Mammary epithelial cell (primary cell): ENCODE measurements at regions of chr6 and their contacts with region 1.

Region 1: GRCh38 chr6:130365166-130366106 is at the start of gene TMEM200A:
- DNase-seq: peak; percentile 56
- H3K4me3 ChIP-seq: peak within 1 kb of the TSS; percentile 86 to 93 (median 93)
- H3K27ac ChIP-seq: peak within 1 kb of the TSS; percentile 76
- H3K4me1 ChIP-seq: peaks cover 5% of the 10 kb centered on the region
- H3K27me3 ChIP-seq: no peaks in the 10 kb centered on the region
- CTCF ChIP-seq: peak; percentile 42 to 88
- total RNA-seq, gene TMEM200A: 3.5 to 15.2 TPM

Region 2: GRCh38 chr6:130381459-130382380 is 16.3 kb after region 1 on chr6:
- CTCF ChIA-PET with region 1: no interaction called
- dilution Hi-C with region 1: no loop called
- in situ Hi-C with region 1: no loop called
- intact Hi-C with region 1: loop called (anchors 2 kb)
- DNase-seq: no peak
- H3K4me3 ChIP-seq: no peak overlapping the region
- H3K27ac ChIP-seq: no peak overlapping the region
- H3K4me1 ChIP-seq: peaks cover 15% of the 10 kb centered on the region
- H3K27me3 ChIP-seq: no peaks in the 10 kb centered on the region
- CTCF ChIP-seq: no peak

Region 3: DNA sequence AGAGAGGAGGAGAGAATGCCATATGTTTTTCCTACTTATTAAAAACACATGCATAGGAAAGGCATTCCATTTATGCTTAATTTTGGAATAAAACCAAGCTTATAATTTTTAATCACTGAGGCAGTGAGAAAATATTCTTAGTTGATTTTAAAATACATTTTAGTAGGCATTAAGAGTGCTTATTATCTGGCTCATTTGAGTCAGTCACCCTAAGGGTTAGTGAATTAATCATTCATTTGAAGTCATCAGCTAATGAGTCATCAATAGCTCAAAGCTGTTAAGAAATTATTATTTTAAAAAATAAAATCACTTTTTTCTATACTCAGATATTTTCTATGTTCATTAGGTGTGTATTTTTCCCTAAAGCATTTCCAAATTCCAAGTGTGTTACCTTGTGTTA is 81.9 kb after region 1 on chr6:
- CTCF ChIA-PET with region 1: no interaction called
- dilution Hi-C with region 1: no loop called
- in situ Hi-C with region 1: no loop called
- intact Hi-C with region 1: loop called (anchors 5 kb)
- DNase-seq: peak; percentile 47
- H3K4me3 ChIP-seq: no peak overlapping the region
- H3K27ac ChIP-seq: peak overlapping the region; percentile 18
- H3K4me1 ChIP-seq: peaks cover 8% of the 10 kb centered on the region
- H3K27me3 ChIP-seq: no peaks in the 10 kb centered on the region
- CTCF ChIP-seq: no peak

Region 4: DNA sequence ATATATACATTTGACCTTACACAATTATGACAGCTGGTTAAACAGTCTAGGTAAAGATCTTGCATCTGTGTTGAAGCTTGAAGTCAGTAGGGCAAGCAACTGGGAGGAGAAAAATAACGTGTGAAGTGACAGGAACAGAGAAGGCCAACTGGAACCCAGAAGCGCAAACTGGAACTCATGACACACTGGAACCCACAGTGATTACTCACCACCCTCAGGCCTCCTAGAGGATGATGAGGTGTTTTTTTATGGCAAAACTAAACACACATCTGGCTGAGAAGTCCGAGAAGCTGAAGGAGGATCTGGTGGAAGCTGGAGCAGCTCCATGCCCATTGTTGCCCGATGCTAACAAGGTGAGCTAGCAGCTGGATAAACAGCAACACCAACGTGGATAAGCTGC is 108.5 kb after region 1 on chr6:
- CTCF ChIA-PET with region 1: no interaction called
- dilution Hi-C with region 1: no loop called
- in situ Hi-C with region 1: no loop called
- intact Hi-C with region 1: loop called (anchors 5 kb)
- DNase-seq: peak; percentile 96
- H3K4me3 ChIP-seq: no peak overlapping the region
- H3K27ac ChIP-seq: peak overlapping the region; percentile 40
- H3K4me1 ChIP-seq: peaks cover 16% of the 10 kb centered on the region
- H3K27me3 ChIP-seq: no peaks in the 10 kb centered on the region
- CTCF ChIP-seq: no peak

Region 5: GRCh38 chr6:130602151-130602770 is 236.8 kb after region 1 on chr6:
- CTCF ChIA-PET with region 1: no interaction called
- dilution Hi-C with region 1: no loop called
- in situ Hi-C with region 1: no loop called
- intact Hi-C with region 1: loop called (anchors 5 kb)
- DNase-seq: peak; percentile 98
- H3K4me3 ChIP-seq: no peak overlapping the region
- H3K27ac ChIP-seq: peak overlapping the region; percentile 92
- H3K4me1 ChIP-seq: peaks cover 55% of the 10 kb centered on the region
- H3K27me3 ChIP-seq: no peaks in the 10 kb centered on the region
- CTCF ChIP-seq: no peak

Region 6: GRCh38 chr6:130676077-130676772 is 310.8 kb after region 1 on chr6:
- CTCF ChIA-PET with region 1: no interaction called
- dilution Hi-C with region 1: no loop called
- in situ Hi-C with region 1: no loop called
- intact Hi-C with region 1: loop called (anchors 5 kb)
- DNase-seq: no peak
- H3K4me3 ChIP-seq: no peak overlapping the region
- H3K27ac ChIP-seq: no peak overlapping the region
- H3K4me1 ChIP-seq: peaks cover 20% of the 10 kb centered on the region
- H3K27me3 ChIP-seq: no peaks in the 10 kb centered on the region
- CTCF ChIP-seq: peak in 1 of 2 donors; percentile 41

Region 7: DNA sequence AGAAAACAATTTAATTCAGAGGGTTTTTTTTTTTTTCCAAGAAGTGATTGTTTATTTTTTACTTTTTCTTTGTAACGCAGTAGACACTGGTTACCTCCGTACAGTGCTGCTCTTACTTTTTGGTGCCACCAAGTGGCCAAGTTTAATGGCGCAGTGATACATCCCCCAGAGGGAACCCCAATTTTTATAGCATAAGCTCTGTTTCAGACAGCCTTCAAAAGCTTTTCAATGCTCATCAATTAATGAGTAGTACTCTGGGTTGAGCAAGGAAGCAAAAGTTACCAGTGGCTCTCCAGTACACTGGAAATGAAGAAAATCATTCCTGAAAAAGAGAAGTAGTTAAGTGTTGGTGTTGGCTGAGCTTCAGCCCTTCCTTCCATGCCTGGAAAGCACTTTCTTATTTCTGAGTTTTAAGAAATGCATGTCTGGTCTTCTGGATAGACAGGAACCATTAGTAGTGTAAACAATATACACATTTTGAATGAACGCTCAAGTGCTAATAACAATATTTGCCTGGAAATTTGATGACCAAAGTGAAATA is 332.6 kb after region 1 on chr6:
- CTCF ChIA-PET with region 1: interaction called, 9 read pairs
- dilution Hi-C with region 1: no loop called
- in situ Hi-C with region 1: loop called in 1 of 2 experiments (anchors 10 kb)
- intact Hi-C with region 1: loop called (anchors 1 kb)
- DNase-seq: peak; percentile 41
- H3K4me3 ChIP-seq: no peak overlapping the region
- H3K27ac ChIP-seq: peak overlapping the region; percentile 24
- H3K4me1 ChIP-seq: peaks cover 8% of the 10 kb centered on the region
- H3K27me3 ChIP-seq: no peaks in the 10 kb centered on the region
- CTCF ChIP-seq: peak; percentile 94 to 96

Region 8: DNA sequence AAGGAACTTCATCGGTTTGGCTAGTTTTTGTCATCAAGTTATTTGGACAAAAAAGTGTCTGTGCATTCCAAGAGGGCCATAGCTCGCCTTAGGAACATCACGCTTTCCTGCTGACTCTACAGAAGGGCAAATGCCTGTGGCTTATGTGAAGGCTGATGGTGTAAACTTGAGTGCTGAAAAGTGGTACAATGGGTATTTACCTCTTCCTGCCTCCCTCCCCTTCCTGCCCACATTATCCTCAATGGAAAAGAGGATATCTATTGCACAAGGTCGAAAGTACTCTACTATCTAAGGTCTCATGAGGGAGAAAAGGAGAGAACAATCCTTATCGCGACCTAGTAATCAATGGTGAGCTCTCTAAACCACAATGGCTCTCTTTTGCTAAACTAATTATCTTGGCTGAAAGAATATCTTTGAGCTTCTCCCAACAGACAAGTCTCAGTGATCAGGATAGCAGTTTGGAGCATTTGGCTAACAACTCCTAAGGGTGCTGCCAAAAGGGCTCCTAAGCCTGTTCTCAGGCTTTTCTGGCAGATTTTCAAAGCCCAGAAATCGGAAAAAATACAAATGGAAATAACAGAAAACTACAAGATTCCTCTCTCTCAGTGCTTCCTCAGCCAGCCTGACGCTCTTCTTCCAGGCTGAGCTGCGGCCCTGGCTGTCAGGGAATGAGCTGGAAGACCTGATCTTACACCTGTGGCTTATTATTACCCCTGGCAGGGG is 1399.8 kb after region 1 on chr6:
- CTCF ChIA-PET with region 1: no interaction called
- dilution Hi-C with region 1: no loop called
- in situ Hi-C with region 1: no loop called
- intact Hi-C with region 1: no loop called
- DNase-seq: peak; percentile 12
- H3K4me3 ChIP-seq: no peak overlapping the region
- H3K27ac ChIP-seq: no peak overlapping the region
- H3K4me1 ChIP-seq: no peaks in the 10 kb centered on the region
- H3K27me3 ChIP-seq: peaks cover 2% of the 10 kb centered on the region
- CTCF ChIP-seq: no peak